Activated B cell treated with CpG ODN at 0.5 μM for 24 hours (primary cell): ENCODE measurements at regions of chr12 and their contacts with region 1.

Region 1: GRCh38 chr12:106841510-106842302 is 67.2 kb downstream of the RIC8B start:
- DNase-seq: no peak
- ATAC-seq: no peak
- H3K4me3 Mint-ChIP-seq: no peak overlapping the region
- H3K27ac Mint-ChIP-seq: no peak overlapping the region
- H3K4me1 Mint-ChIP-seq: no peaks in the 10 kb centered on the region
- H3K27me3 Mint-ChIP-seq: no peaks in the 10 kb centered on the region
- CTCF ChIP-seq: no peak

Region 2: GRCh38 chr12:106357549-106358395 is 483.9 kb before region 1 on chr12 and contains the start of gene POLR3B:
- CTCF ChIA-PET with region 1: interaction called, 25 read pairs
- POLR2A ChIA-PET with region 1: no interaction called
- intact Hi-C with region 1: loop called (anchors 1 kb)
- DNase-seq: peak; percentile 96
- ATAC-seq: peak; percentile 92
- H3K4me3 Mint-ChIP-seq: peak within 1 kb of the TSS; percentile 95
- H3K27ac Mint-ChIP-seq: peak within 1 kb of the TSS; percentile 92
- H3K4me1 Mint-ChIP-seq: peaks cover 16% of the 10 kb centered on the region
- H3K27me3 Mint-ChIP-seq: no peaks in the 10 kb centered on the region
- CTCF ChIP-seq: peak; percentile 49
- total RNA-seq, gene POLR3B: 7.3 and 8.0 TPM in 2 replicates

Region 3: GRCh38 chr12:106386813-106387535 is 454.7 kb before region 1 on chr12:
- CTCF ChIA-PET with region 1: interaction called, 17 read pairs
- POLR2A ChIA-PET with region 1: no interaction called
- intact Hi-C with region 1: loop called (anchors 1 kb)
- DNase-seq: no peak
- ATAC-seq: no peak
- H3K4me3 Mint-ChIP-seq: no peak overlapping the region
- H3K27ac Mint-ChIP-seq: no peak overlapping the region
- H3K4me1 Mint-ChIP-seq: no peaks in the 10 kb centered on the region
- H3K27me3 Mint-ChIP-seq: peaks cover 4% of the 10 kb centered on the region
- CTCF ChIP-seq: no peak

Region 4: DNA sequence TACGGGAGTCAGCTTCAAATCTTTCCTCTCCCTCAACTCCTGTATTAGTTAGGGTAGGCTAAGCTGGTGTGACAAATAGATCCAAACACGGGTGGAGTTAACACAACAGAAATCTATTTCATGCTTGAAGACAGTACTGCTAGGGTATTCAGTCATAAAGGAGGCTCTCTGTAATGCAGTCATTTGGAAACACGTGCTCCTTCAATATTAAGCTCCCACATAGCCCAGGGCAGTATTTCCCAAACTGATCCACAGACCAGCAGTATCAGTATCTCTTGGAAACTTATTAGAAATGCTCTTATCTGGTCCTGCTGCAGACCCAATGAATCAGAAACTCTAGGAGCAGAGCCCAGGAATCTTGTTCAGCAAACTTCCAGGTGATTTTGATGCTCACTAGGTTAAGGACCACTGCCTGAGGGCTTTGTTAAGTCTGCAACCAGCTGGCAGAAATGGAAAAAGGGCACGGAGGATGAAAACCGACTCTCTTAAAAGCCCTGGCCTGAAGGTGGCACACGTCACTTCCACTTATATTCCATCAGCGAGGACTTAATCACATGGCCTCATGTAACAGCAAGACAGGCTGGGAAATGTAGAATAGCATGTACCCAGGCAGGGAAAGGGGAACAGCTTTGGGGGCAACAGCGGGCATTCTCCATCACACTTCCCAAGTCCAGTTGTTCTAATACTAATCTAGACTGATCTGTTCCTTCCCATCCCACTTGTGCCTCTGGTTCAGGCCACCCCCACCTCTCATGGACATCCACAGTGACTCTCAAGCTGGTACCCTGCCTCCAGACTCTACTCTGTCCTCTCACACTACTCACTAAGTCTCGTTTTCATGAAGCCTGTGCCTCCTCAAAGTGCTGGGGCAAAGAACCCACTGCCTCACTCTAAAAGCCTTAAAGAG is 105.4 kb before region 1 on chr12:
- CTCF ChIA-PET with region 1: interaction called, 9 read pairs
- POLR2A ChIA-PET with region 1: no interaction called
- intact Hi-C with region 1: loop called (anchors 10 kb)
- DNase-seq: no peak
- ATAC-seq: no peak
- H3K4me3 Mint-ChIP-seq: no peak overlapping the region
- H3K27ac Mint-ChIP-seq: no peak overlapping the region
- H3K4me1 Mint-ChIP-seq: no peaks in the 10 kb centered on the region
- H3K27me3 Mint-ChIP-seq: peaks cover 45% of the 10 kb centered on the region
- CTCF ChIP-seq: no peak